HCT116 (cell line): ENCODE measurements at regions of chr15 and their contacts with region 1.

Region 1: GRCh38 chr15:81555346-81555745 is 181.3 kb upstream of the TMC3 start:
- DNase-seq: no peak
- ATAC-seq: no peak
- H3K4me3 ChIP-seq: no peak overlapping the region
- H3K27ac ChIP-seq: no peak overlapping the region
- H3K4me1 ChIP-seq: no peaks in the 10 kb centered on the region
- H3K27me3 ChIP-seq: peaks cover 8% of the 10 kb centered on the region
- CTCF ChIP-seq: no peak
- POLR2A ChIP-seq: no peak
- RAD21 ChIP-seq: no peak

Region 2: GRCh38 chr15:81619002-81619401 is 63.7 kb after region 1 on chr15:
- CTCF ChIA-PET with region 1: no interaction called
- POLR2A ChIA-PET with region 1: no interaction called
- RAD21 ChIA-PET with region 1: no interaction called
- intact Hi-C with region 1: no loop called
- DNase-seq: no peak
- ATAC-seq: no peak
- H3K4me3 ChIP-seq: no peak overlapping the region
- H3K27ac ChIP-seq: no peak overlapping the region
- H3K4me1 ChIP-seq: no peaks in the 10 kb centered on the region
- H3K27me3 ChIP-seq: 0 out of 2 replicates have a peak, but pooled peaks cover 4% of the 10 kb centered on the region
- CTCF ChIP-seq: no peak
- POLR2A ChIP-seq: no peak
- RAD21 ChIP-seq: no peak

Region 3: GRCh38 chr15:81924729-81925128 is 369.4 kb after region 1 on chr15:
- CTCF ChIA-PET with region 1: no interaction called
- POLR2A ChIA-PET with region 1: no interaction called
- RAD21 ChIA-PET with region 1: no interaction called
- intact Hi-C with region 1: loop called (anchors 10 kb)
- DNase-seq: no peak
- ATAC-seq: no peak
- H3K4me3 ChIP-seq: no peak overlapping the region
- H3K27ac ChIP-seq: no peak overlapping the region
- H3K4me1 ChIP-seq: no peaks in the 10 kb centered on the region
- H3K27me3 ChIP-seq: no peaks in the 10 kb centered on the region
- CTCF ChIP-seq: no peak
- POLR2A ChIP-seq: no peak
- RAD21 ChIP-seq: no peak